B cell (primary cell): ENCODE measurements at regions of chr6 and their contacts with region 1.

Region 1: DNA sequence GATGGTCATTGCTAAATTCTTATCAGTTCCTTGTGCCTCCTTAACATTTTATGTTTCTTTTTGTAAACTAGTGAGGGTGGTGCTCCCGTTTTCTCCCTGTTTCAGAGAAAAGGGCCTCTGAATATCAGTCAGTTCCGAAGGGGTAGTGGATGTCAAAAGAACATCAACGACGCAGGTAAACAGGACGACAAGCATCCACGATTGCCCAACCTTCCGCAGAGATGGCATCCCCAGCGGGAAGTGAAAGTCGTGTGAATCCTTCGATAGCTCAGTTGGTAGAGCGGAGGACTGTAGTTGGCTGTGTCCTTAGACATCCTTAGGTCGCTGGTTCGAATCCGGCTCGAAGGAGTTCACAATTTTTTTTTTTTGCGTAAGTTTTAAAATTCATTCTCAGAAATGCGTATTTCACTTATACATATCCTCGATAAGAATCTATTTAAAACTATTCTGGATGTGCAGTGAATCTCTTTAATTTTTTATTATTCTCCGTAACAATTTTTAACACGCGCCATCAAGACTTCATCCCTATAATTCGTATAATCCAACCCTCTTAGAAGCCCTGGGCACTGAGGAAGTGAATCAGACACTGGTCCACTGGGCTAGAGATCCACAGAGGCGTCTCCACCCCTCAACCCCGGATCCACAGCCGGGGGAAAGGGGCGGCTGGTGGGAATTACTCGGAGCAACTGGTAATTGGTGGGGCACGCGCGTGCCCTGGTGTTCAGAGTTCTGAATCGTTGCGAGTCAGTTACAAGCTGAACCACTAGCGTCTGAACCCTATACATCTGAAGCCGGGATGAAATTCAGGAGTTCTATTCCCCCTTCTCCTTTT is 27.9 kb upstream of the ABT1 start:
- DNase-seq: peak; percentile 97
- ATAC-seq: peak; percentile 82
- H3K4me3 ChIP-seq: peak overlapping the region; percentile 49 to 88 (median 69)
- H3K4me3 Mint-ChIP-seq: peak overlapping the region; percentile 97
- H3K27ac ChIP-seq: peak overlapping the region; percentile 18 to 56
- H3K27ac Mint-ChIP-seq: peak overlapping the region; percentile 100
- H3K4me1 ChIP-seq: peaks cover 14 to 17% of the 10 kb centered on the region in 2 donors
- H3K4me1 Mint-ChIP-seq: peaks cover 28% of the 10 kb centered on the region
- H3K27me3 ChIP-seq: no peaks in the 10 kb centered on the region
- H3K27me3 Mint-ChIP-seq: peaks cover 3% of the 10 kb centered on the region
- CTCF ChIP-seq: no peak

Region 2: DNA sequence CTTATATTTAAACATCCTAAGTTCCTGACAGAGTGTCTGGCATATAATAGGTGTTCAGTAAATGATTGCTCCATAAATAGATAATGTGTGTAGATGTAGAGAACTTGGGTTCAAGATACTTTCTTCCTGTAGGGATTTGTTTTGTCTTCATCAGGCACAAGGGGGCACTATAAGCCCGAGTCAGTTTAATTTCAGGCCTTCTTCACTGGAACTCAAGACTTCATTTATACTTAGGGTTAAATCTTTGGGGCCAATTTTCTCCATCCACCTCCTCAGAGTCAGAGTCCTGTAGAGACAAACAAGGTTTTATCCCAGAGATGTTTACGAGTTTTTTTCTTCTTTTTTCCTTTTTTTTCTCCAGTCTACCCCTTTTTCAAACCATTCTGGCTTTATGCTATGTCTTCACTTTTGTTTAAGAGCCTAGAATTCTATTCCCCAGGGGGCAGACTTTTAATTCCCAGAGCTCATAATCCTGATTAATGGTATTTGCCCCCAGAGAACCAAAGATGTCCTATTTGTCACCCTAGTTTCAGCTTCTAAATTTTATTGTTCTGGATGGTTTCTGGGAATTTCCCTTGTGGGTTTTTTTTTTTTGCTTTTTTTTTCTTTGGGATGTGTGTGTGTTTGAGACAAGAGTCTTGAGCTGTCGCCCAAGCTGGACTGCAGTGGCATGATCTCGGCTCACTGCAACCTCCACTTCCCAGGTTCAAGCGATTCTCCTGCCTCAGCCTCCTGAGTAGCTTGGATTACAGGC is 393.2 kb before region 1 on chr6:
- CTCF ChIA-PET with region 1: interaction called, 5 read pairs
- POLR2A ChIA-PET with region 1: interaction called, 3 read pairs
- intact Hi-C with region 1: loop called (anchors 2 kb)
- DNase-seq: peak; percentile 81
- ATAC-seq: no peak
- H3K4me3 ChIP-seq: no peak overlapping the region
- H3K4me3 Mint-ChIP-seq: peak overlapping the region; percentile 21
- H3K27ac ChIP-seq: no peak overlapping the region
- H3K27ac Mint-ChIP-seq: peak overlapping the region; percentile 85
- H3K4me1 ChIP-seq: peaks cover 21 to 26% of the 10 kb centered on the region in 2 donors
- H3K4me1 Mint-ChIP-seq: peaks cover 29% of the 10 kb centered on the region
- H3K27me3 ChIP-seq: no peaks in the 10 kb centered on the region
- H3K27me3 Mint-ChIP-seq: no peaks in the 10 kb centered on the region
- CTCF ChIP-seq: peak; percentile 93

Region 3: GRCh38 chr6:26322645-26323482 is 246.0 kb before region 1 on chr6:
- CTCF ChIA-PET with region 1: interaction called, 7 read pairs
- POLR2A ChIA-PET with region 1: no interaction called
- intact Hi-C with region 1: loop called (anchors 1 kb)
- DNase-seq: peak; percentile 83
- ATAC-seq: peak; percentile 59
- H3K4me3 ChIP-seq: peak overlapping the region in 4 of 5 experiments; percentile 49 to 74 (median 59)
- H3K4me3 Mint-ChIP-seq: peak overlapping the region; percentile 74
- H3K27ac ChIP-seq: no peak overlapping the region
- H3K27ac Mint-ChIP-seq: peak overlapping the region; percentile 70
- H3K4me1 ChIP-seq: peaks cover 14 to 31% of the 10 kb centered on the region in 2 donors
- H3K4me1 Mint-ChIP-seq: peaks cover 22% of the 10 kb centered on the region
- H3K27me3 ChIP-seq: peaks cover 0 to 43% (median 25%) of the 10 kb centered on the region in 4 experiments
- H3K27me3 Mint-ChIP-seq: peaks cover 26% of the 10 kb centered on the region
- CTCF ChIP-seq: no peak

Region 4: GRCh38 chr6:26457806-26458688 is 110.8 kb before region 1 on chr6 and contains the start of gene BTN2A1:
- CTCF ChIA-PET with region 1: no interaction called
- POLR2A ChIA-PET with region 1: no interaction called
- intact Hi-C with region 1: loop called (anchors 1 kb)
- DNase-seq: peak; percentile 89
- ATAC-seq: peak; percentile 96
- H3K4me3 ChIP-seq: peak within 1 kb of the TSS; percentile 75 to 96 (median 92)
- H3K4me3 Mint-ChIP-seq: peak within 1 kb of the TSS; percentile 100
- H3K27ac ChIP-seq: peak within 1 kb of the TSS; percentile 77 to 89
- H3K27ac Mint-ChIP-seq: peak within 1 kb of the TSS; percentile 98
- H3K4me1 ChIP-seq: peaks cover 30 to 47% of the 10 kb centered on the region in 2 donors
- H3K4me1 Mint-ChIP-seq: peaks cover 72% of the 10 kb centered on the region
- H3K27me3 ChIP-seq: no peaks in the 10 kb centered on the region
- H3K27me3 Mint-ChIP-seq: no peaks in the 10 kb centered on the region
- CTCF ChIP-seq: no peak
- total RNA-seq, gene BTN2A1: 63.3 and 69.6 TPM in 2 replicates

Region 5: GRCh38 chr6:26532699-26533531 is 35.9 kb before region 1 on chr6:
- CTCF ChIA-PET with region 1: interaction called, 18 read pairs
- POLR2A ChIA-PET with region 1: interaction called, 9 read pairs
- intact Hi-C with region 1: loop called (anchors 1 kb)
- DNase-seq: peak; percentile 95
- ATAC-seq: peak; percentile 26
- H3K4me3 ChIP-seq: peak overlapping the region; percentile 56 to 86 (median 78)
- H3K4me3 Mint-ChIP-seq: peak overlapping the region; percentile 99
- H3K27ac ChIP-seq: peak overlapping the region; percentile 45 to 78
- H3K27ac Mint-ChIP-seq: peak overlapping the region; percentile 97
- H3K4me1 ChIP-seq: peaks cover 23 to 27% of the 10 kb centered on the region in 2 donors
- H3K4me1 Mint-ChIP-seq: peaks cover 48% of the 10 kb centered on the region
- H3K27me3 ChIP-seq: no peaks in the 10 kb centered on the region
- H3K27me3 Mint-ChIP-seq: peaks cover 3% of the 10 kb centered on the region
- CTCF ChIP-seq: no peak

Region 6: GRCh38 chr6:26553635-26554446 is 15.0 kb before region 1 on chr6:
- CTCF ChIA-PET with region 1: interaction called, 35 read pairs
- POLR2A ChIA-PET with region 1: interaction called, 21 read pairs
- intact Hi-C with region 1: loop called (anchors 1 kb)
- DNase-seq: peak; percentile 92
- ATAC-seq: peak; percentile 42
- H3K4me3 ChIP-seq: peak overlapping the region; percentile 59 to 90 (median 74)
- H3K4me3 Mint-ChIP-seq: no peak overlapping the region
- H3K27ac ChIP-seq: peak overlapping the region; percentile 26 to 62
- H3K27ac Mint-ChIP-seq: no peak overlapping the region
- H3K4me1 ChIP-seq: peaks cover 15 to 45% of the 10 kb centered on the region in 2 donors
- H3K4me1 Mint-ChIP-seq: peaks cover 22% of the 10 kb centered on the region
- H3K27me3 ChIP-seq: no peaks in the 10 kb centered on the region
- H3K27me3 Mint-ChIP-seq: no peaks in the 10 kb centered on the region
- CTCF ChIP-seq: no peak